A549 (cell line): ENCODE measurements at regions of chr2 and their contacts with region 1.

Region 1: GRCh38 chr2:101205521-101205998 is 47.1 kb upstream of the CNOT11 start:
- DNase-seq: peak; percentile 59 to 93
- ATAC-seq: peak; percentile 97 to 99
- H3K4me3 ChIP-seq: peak overlapping the region; percentile 30; the same call in 2 of the 3 replicates
- H3K27ac ChIP-seq: peak overlapping the region; percentile 80 to 86
- H3K4me1 ChIP-seq: peaks cover 11% of the 10 kb centered on the region
- CTCF ChIP-seq: peak; percentile 70
- EP300 ChIP-seq: no peak
- POLR2A ChIP-seq: no peak
- RAD21 ChIP-seq: peak; percentile 86

Region 2: DNA sequence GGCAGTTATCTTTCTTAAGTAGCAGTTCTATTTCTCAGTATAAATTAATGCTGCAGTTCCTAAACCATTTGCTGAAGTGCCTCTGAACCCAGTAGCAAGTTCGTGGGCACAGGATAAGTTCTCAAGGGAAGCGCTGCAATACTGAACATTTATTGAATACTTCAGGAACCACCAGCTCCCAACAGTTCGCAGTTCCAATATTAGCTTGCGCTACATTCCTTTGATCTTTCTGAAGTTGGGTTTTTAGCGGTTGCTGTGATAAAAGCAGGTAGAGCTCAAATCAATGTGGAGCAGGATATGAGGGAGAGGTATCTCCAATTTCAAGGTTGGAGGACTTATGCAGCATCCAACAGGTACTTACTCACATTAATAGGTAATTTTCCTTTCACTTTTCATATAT is 609.1 kb before region 1 on chr2:
- CTCF ChIA-PET with region 1: interaction called, 20 read pairs
- POLR2A ChIA-PET with region 1: no interaction called
- DNase-seq: no peak
- ATAC-seq: no peak
- H3K4me3 ChIP-seq: no peak overlapping the region
- H3K27ac ChIP-seq: no peak overlapping the region
- H3K4me1 ChIP-seq: no peaks in the 10 kb centered on the region
- CTCF ChIP-seq: no peak
- EP300 ChIP-seq: no peak
- POLR2A ChIP-seq: no peak
- RAD21 ChIP-seq: no peak

Region 3: GRCh38 chr2:101030863-101031554 is 174.6 kb before region 1 on chr2:
- CTCF ChIA-PET with region 1: interaction called, 38 read pairs
- POLR2A ChIA-PET with region 1: no interaction called
- DNase-seq: no peak
- ATAC-seq: peak; percentile 19 to 27; a peak in 2 of 6 replicates
- H3K4me3 ChIP-seq: no peak overlapping the region
- H3K27ac ChIP-seq: no peak overlapping the region
- H3K4me1 ChIP-seq: peaks cover 3% of the 10 kb centered on the region; the same call in 1 of the 3 replicates
- CTCF ChIP-seq: no peak
- EP300 ChIP-seq: no peak
- POLR2A ChIP-seq: no peak
- RAD21 ChIP-seq: peak in 1 of 2 experiments; percentile 28; a peak in 1 of 5 replicates

Region 4: DNA sequence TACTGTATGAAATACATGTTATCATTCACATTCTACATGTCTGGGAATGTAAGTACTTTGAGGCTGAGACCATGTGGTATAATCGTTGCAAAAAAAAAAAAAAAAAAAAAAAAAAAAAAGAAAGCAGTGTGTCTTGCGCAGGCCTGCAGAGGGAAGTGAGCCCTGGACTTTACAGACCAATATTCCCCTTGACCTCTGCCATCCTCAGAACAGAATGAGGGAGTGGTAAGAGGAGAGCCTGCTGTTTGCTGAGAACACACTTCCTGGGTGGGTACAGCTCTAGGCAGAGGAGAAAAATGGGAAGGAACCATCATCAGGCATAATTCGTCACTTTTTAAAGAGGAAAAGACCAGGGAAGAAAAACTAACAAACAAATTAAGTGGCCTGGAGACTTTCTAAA is 25.6 kb before region 1 on chr2:
- CTCF ChIA-PET with region 1: interaction called, 12 read pairs
- POLR2A ChIA-PET with region 1: interaction called, 3 read pairs
- DNase-seq: no peak
- ATAC-seq: peak in 1 of 2 experiments; percentile 67; a peak in 4 of 6 replicates
- H3K4me3 ChIP-seq: no peak overlapping the region
- H3K27ac ChIP-seq: no peak overlapping the region
- H3K4me1 ChIP-seq: peaks cover 18% of the 10 kb centered on the region
- CTCF ChIP-seq: no peak
- EP300 ChIP-seq: no peak
- POLR2A ChIP-seq: no peak
- RAD21 ChIP-seq: no peak

Region 5: GRCh38 chr2:101223814-101224231 is 18.3 kb after region 1 on chr2:
- CTCF ChIA-PET with region 1: interaction called, 40 read pairs
- POLR2A ChIA-PET with region 1: no interaction called
- DNase-seq: no peak
- ATAC-seq: no peak
- H3K4me3 ChIP-seq: no peak overlapping the region
- H3K27ac ChIP-seq: no peak overlapping the region
- H3K4me1 ChIP-seq: no peaks in the 10 kb centered on the region
- CTCF ChIP-seq: no peak
- EP300 ChIP-seq: no peak
- POLR2A ChIP-seq: no peak
- RAD21 ChIP-seq: no peak